ENCODE measurements at regions of chr2 and their contacts with region 1.

Region 1: DNA sequence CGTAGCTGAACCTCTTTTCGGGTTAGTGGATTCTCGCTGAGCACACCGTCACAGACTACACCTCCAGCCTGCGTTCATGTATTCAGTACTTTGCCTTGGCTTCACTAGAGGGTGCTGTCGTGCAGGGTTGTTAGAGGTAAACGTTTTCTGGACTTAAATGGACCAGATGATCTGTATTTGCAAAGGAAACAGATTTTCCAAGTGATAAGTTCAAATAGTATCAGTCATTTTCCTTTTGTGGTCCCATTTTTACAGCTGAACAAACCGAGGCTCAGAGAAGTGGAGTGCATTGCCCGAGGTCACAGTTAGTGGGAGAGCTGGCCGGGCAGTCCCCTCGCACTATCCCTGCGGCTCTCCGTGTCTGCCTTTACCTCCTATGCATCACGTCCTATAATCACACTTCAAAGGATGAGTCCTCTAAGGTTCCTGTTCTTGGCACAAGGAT is 125.9 kb downstream of the MAP4K4 start:
- DNase-seq: peak; percentile 81
- ATAC-seq: peak; percentile 84
- H3K4me3 Mint-ChIP-seq: no peak overlapping the region
- H3K27ac Mint-ChIP-seq: no peak overlapping the region
- H3K4me1 Mint-ChIP-seq: peaks cover 57% of the 10 kb centered on the region
- H3K27me3 Mint-ChIP-seq: no peaks in the 10 kb centered on the region

Region 2: DNA sequence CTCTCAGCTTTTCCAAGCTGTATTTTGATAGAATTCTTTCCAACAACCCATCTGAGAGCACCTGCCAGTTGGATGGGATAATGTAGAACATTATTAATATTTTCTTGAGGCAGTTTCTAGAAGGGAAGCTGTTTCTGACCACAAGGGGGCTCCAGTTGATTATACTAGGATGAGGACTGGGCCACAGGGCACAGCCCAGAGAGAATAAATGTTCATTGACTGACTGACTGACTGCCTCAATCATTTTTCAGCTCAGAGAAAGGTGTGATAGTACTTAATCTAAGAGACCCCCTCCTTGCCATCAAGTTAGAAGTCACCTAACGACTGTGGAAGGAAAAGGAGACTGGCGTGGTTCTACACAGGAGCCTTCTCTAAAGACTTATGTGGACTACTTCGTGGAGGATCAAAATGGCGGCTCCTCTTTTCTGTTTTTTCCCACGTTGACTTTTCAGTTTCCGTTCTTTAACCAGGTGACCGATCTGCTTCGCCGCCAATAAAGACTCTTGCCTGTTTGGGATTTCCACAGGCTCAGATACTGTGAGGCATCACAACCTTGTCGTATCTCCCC is 404.2 kb before region 1 on chr2:
- CTCF ChIA-PET with region 1: interaction called, 83 read pairs
- POLR2A ChIA-PET with region 1: no interaction called
- DNase-seq: peak; percentile 80
- ATAC-seq: peak; percentile 60
- H3K4me3 Mint-ChIP-seq: no peak overlapping the region
- H3K27ac Mint-ChIP-seq: no peak overlapping the region
- H3K4me1 Mint-ChIP-seq: peaks cover 2% of the 10 kb centered on the region
- H3K27me3 Mint-ChIP-seq: no peaks in the 10 kb centered on the region

Measured in activated CD8-positive, alpha-beta T cell treated with anti-CD3 and anti-CD28 coated beads, Interleukin-2, amount 10 ng/mL, durations not matched to agents 7 days and 5 days (primary cell).